ENCODE measurements at regions of chr6 and their contacts with region 1.

Region 1: GRCh38 chr6:165636402-165637048 is 26.5 kb downstream of the PDE10A start:
- DNase-seq: no peak
- ATAC-seq: no peak
- H3K4me3 ChIP-seq: no peak overlapping the region
- H3K27ac ChIP-seq: no peak overlapping the region
- H3K4me1 ChIP-seq: no peaks in the 10 kb centered on the region
- H3K27me3 ChIP-seq: no peaks in the 10 kb centered on the region
- CTCF ChIP-seq: no peak

Region 2: DNA sequence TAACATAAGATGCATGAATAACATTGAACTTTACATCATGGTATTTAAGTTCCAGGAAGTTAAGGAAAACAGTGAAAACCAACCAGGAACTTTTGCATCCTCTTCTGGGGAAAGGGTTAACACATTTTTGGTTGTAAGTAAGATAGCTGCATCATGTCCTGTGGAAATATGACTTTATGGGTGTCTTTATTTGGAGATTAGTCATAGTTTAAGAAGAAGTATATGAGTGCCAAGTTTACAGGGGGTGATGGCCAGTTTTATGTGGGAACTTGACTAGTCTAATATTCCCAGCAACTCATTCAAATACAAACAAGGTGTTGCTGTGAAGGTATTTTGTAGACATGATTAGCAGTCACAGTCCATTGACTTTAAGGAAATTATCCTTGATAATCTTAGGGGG is 51.5 kb before region 1 on chr6:
- CTCF ChIA-PET with region 1: no interaction called
- POLR2A ChIA-PET with region 1: no interaction called
- intact Hi-C with region 1: loop called (anchors 10 kb)
- DNase-seq: peak; percentile 77
- ATAC-seq: peak; percentile 67
- H3K4me3 ChIP-seq: no peak overlapping the region
- H3K27ac ChIP-seq: peak overlapping the region; percentile 100
- H3K4me1 ChIP-seq: peaks cover 15% of the 10 kb centered on the region
- H3K27me3 ChIP-seq: no peaks in the 10 kb centered on the region
- CTCF ChIP-seq: no peak

Measured in PC-3 (cell line).